Heart left ventricle (tissue), 16 donors: ENCODE measurements at regions of chr19 and their contacts with region 1.

Region 1: GRCh38 chr19:6056801-6057650 is 53.3 kb downstream of the RFX2 start:
- DNase-seq: peak in 4 of 5 donors; percentile 70 to 86 (median 78)
- ATAC-seq: peak; percentile 76 to 92 (median 88)
- H3K4me3 ChIP-seq: peak overlapping the region in 9 of 12 donors; percentile 4 to 32 (median 22)
- H3K27ac ChIP-seq: peak overlapping the region; percentile 74 to 97 (median 90)
- H3K4me1 ChIP-seq: peaks cover 0 to 62% (median 42%) of the 10 kb centered on the region in 12 donors
- H3K27me3 ChIP-seq: no peaks in the 10 kb centered on the region
- CTCF ChIP-seq: no peak
- POLR2A ChIP-seq: peak in 1 of 2 donors; percentile 32

Region 2: DNA sequence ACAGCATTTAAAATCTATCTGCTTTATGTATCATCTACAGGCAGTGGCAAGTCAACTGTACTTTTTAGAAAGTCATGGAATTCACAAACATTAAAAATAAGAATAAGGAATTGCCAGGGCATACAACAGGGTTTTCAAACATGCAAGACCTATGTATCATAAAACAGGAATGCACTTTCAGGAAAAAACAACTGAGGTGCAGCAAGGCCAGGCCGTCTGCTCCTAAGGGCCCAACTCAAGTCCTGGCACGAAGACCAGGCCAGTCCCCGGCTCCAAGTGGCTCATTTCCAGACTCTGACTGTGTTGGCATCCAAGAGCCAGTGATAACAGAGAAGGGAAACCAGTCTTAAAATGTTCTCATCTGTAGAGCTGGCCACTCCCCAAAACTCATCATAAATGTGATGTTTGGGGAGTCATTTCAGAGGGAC is 46.2 kb after region 1 on chr19:
- intact Hi-C with region 1: loop called in 5 of 10 experiments (anchors 2 to 5 kb)
- DNase-seq: peak; percentile 71 to 89 (median 76)
- ATAC-seq: peak; percentile 84 to 91 (median 86)
- H3K4me3 ChIP-seq: no peak overlapping the region
- H3K27ac ChIP-seq: peak overlapping the region in 11 of 12 donors; percentile 20 to 85 (median 61)
- H3K4me1 ChIP-seq: peaks cover 0 to 71% (median 47%) of the 10 kb centered on the region in 12 donors
- H3K27me3 ChIP-seq: no peaks in the 10 kb centered on the region
- CTCF ChIP-seq: no peak
- POLR2A ChIP-seq: no peak

Region 3: DNA sequence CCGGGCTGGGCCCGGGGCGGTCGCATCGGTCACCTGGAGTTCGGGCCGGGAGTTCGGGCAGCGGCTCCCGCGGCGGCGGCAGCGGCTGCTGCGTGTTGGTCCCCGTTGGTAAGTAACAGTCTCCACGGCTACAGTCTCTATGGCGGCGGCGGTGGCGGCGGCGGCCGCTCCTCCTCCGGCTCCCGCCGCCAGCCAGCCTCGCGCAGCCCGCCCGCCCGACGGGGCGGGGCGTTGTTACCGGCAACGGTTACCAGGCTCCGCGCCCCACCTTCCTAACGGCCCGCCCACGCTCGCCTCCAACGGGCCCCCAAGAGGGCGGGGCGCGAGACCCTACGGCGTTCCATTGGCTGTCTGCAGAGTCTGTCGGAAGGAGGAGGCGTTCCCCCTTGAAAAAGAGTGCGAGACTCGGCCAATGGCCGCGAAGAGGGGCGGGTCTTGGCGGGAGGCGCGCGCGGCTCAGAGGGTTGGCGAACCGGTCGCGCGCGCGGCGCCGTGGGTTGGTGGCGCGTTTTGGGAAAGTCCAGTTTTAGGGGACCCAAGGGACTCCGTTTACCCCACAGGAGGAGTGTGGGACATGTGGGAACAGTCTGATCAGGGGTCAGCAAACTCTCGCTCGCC is 53.4 kb after region 1 on chr19 and contains the start of gene RFX2:
- intact Hi-C with region 1: loop called in 7 of 10 experiments (anchors 2 to 5 kb)
- DNase-seq: peak; percentile 99
- ATAC-seq: peak; percentile 99 to 100 (median 99)
- H3K4me3 ChIP-seq: peak within 1 kb of the TSS; percentile 48 to 84 (median 70)
- H3K27ac ChIP-seq: peak within 1 kb of the TSS; percentile 17 to 93 (median 84)
- H3K4me1 ChIP-seq: peaks cover 0 to 33% (median 12%) of the 10 kb centered on the region in 12 donors
- H3K27me3 ChIP-seq: no peaks in the 10 kb centered on the region
- CTCF ChIP-seq: peak in 1 of 12 donors; percentile 10
- POLR2A ChIP-seq: peak in 1 of 2 donors; percentile 70
- total RNA-seq, gene RFX2: 2.8 to 20.0 (median 5.8) TPM

Region 4: DNA sequence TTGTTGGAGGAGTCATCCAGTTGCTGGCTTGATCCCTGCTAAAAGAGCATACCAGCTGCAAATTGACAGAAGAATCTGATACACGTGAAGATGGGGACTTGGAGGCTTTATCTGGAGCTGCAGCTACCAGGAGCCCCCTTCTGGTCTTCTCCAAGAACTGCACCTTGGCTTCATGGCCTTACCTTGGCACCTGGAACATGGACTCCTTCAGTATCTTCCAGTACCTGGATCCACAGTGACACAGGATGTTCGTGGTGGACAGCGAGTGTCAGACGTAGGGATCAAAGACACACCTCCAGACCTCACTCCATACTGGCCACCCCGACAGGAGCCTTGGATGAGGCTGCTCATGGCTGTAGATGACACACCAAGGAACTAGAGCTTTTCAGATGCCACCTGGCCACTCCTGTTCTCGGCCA is 68.6 kb after region 1 on chr19:
- intact Hi-C with region 1: loop called in 1 of 10 experiments (anchors 2 kb)
- DNase-seq: peak in 4 of 5 donors; percentile 48 to 57 (median 53)
- ATAC-seq: peak; percentile 61 to 87 (median 80)
- H3K4me3 ChIP-seq: no peak overlapping the region
- H3K27ac ChIP-seq: no peak overlapping the region
- H3K4me1 ChIP-seq: no peaks in the 10 kb centered on the region
- H3K27me3 ChIP-seq: no peaks in the 10 kb centered on the region
- CTCF ChIP-seq: peak; percentile 91 to 97 (median 94)
- POLR2A ChIP-seq: no peak